ENCODE measurements at regions of chr3 and their contacts with region 1.

Region 1: GRCh38 chr3:170414202-170414663 is 4.4 kb upstream of the CLDN11 start:
- DNase-seq: peak in 1 of 2 experiments; percentile 52
- H3K4me3 ChIP-seq: no peak overlapping the region
- H3K4me3 Mint-ChIP-seq: no peak overlapping the region
- H3K27ac Mint-ChIP-seq: no peak overlapping the region
- H3K4me1 ChIP-seq: no peaks in the 10 kb centered on the region
- H3K4me1 Mint-ChIP-seq: no peaks in the 10 kb centered on the region
- H3K27me3 ChIP-seq: 0 out of 2 replicates have a peak, but pooled peaks cover 2% of the 10 kb centered on the region
- H3K27me3 Mint-ChIP-seq: peaks cover 3% of the 10 kb centered on the region
- CTCF ChIP-seq: peak; percentile 79 to 94

Region 2: GRCh38 chr3:170307671-170308403 is 106.4 kb before region 1 on chr3:
- CTCF ChIA-PET with region 1: interaction called, 6 read pairs
- POLR2A ChIA-PET with region 1: no interaction called
- intact Hi-C with region 1: loop called (anchors 1 kb)
- DNase-seq: peak; percentile 63 to 66
- H3K4me3 ChIP-seq: no peak overlapping the region
- H3K4me3 Mint-ChIP-seq: peak overlapping the region; percentile 29
- H3K27ac Mint-ChIP-seq: peak overlapping the region; percentile 91
- H3K4me1 ChIP-seq: peaks cover 29% of the 10 kb centered on the region
- H3K4me1 Mint-ChIP-seq: peaks cover 11% of the 10 kb centered on the region
- H3K27me3 ChIP-seq: no peaks in the 10 kb centered on the region
- H3K27me3 Mint-ChIP-seq: no peaks in the 10 kb centered on the region
- CTCF ChIP-seq: no peak

Region 3: DNA sequence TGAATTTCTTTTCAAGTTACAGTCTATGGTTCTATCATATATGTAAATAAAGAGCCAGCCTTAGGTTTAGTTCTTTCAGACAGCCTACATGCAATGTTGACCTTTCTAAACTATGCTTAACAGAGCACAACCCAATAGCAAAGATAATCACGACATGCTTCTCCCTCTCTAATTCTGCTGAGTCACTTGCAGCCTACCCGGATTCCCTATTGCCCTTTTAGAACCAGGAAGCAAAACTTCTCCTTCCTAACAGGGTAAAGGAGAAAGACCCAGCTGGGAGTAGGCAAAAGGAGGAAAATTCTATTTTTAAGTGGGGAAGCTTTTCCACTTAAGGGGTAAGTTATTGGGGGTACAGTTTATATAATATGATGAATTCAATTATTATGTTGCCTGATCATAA is 92.3 kb after region 1 on chr3:
- CTCF ChIA-PET with region 1: no interaction called
- POLR2A ChIA-PET with region 1: no interaction called
- intact Hi-C with region 1: no loop called
- DNase-seq: peak in 1 of 2 experiments; percentile 12
- H3K4me3 ChIP-seq: no peak overlapping the region
- H3K4me3 Mint-ChIP-seq: no peak overlapping the region
- H3K27ac Mint-ChIP-seq: peak overlapping the region; percentile 53
- H3K4me1 ChIP-seq: peaks cover 10% of the 10 kb centered on the region
- H3K4me1 Mint-ChIP-seq: no peaks in the 10 kb centered on the region
- H3K27me3 ChIP-seq: no peaks in the 10 kb centered on the region
- H3K27me3 Mint-ChIP-seq: no peaks in the 10 kb centered on the region
- CTCF ChIP-seq: no peak

Region 4: DNA sequence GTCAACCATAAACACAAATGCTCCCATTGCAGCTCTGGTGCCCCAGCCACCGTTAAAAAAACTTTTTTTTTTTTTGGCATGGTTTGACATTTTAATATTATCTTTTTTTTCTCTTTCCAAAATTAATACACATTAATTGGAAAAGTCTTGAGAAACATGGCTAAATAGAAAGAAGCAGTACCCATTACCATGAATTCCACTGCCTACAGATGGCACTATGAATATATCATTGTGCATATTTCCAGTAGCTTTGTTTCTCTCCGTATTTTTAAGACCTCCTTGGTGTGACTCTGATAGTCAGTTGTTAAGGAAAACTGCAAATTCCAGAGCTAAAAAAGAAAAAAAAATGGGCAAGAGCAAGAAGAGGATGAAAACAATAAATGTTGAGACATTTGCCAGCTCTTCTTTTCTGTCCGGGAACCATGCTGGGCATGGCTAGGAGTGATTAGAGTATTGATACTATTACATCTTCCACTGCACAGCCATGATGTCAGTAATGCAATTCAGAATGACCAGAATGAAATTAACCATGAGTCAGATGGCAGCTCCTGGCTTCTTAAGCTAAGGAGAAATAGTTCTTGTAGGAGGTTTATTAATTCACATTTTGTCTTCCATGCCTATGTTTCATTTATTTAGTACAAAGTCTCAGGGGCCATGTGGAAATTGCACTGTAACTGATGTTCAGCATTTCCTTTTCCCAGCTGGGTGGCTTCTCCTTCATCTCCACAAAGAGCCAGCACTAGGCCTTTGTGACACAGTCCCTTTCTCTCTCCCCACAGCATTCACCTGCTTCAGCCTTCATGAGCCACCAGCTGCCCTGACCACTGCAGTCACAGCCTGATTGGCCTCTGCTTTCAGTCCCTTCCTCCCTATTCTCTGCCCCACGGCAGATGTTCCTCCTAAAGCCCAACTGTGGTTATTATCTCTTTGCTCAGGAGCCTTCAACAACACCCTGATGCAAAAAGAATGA is 139.8 kb after region 1 on chr3:
- CTCF ChIA-PET with region 1: no interaction called
- POLR2A ChIA-PET with region 1: no interaction called
- intact Hi-C with region 1: loop called (anchors 5 kb)
- DNase-seq: no peak
- H3K4me3 ChIP-seq: no peak overlapping the region
- H3K4me3 Mint-ChIP-seq: no peak overlapping the region
- H3K27ac Mint-ChIP-seq: no peak overlapping the region
- H3K4me1 ChIP-seq: no peaks in the 10 kb centered on the region
- H3K4me1 Mint-ChIP-seq: no peaks in the 10 kb centered on the region
- H3K27me3 ChIP-seq: no peaks in the 10 kb centered on the region
- H3K27me3 Mint-ChIP-seq: peaks cover 9% of the 10 kb centered on the region
- CTCF ChIP-seq: no peak

Region 5: DNA sequence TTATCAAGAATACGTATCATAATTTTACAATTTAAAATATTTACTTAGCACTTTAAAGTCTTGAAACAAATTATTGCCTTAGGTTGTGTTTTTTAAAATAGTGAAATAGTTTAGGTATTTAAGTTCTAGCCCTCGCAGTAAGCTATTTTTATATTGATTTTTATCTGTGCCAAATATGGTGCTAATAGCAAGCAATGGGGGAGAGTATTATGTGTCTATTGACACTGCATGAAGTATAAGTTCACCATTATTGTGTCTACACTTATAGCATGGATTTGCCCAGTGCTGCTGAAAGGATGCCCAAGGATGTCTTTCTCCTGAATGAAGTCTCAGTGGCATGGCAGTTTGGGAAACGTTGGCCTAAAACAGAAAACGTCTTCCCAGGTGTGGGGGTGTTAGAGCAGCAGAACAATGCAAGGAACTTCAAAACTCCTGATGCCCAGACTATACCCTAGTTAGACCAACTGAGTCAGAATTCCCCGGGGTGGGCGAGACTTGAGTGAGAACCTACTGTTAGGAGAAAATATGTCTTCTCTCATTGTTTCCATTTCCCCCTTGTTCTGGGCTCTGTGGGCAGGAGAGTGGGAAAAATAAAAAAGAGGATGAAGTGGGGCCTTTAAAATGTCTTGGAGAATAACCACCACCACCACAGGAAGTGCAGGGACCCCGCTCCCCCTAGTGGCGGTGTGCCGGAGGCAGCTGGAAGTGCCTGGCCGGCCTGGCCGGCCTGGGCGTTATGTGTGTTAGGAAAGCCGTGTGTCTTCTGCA is 275.8 kb after region 1 on chr3:
- CTCF ChIA-PET with region 1: interaction called, 7 read pairs
- POLR2A ChIA-PET with region 1: no interaction called
- intact Hi-C with region 1: loop called (anchors 1 kb)
- DNase-seq: peak; percentile 63 to 77
- H3K4me3 ChIP-seq: no peak overlapping the region
- H3K4me3 Mint-ChIP-seq: no peak overlapping the region
- H3K27ac Mint-ChIP-seq: peak overlapping the region; percentile 80
- H3K4me1 ChIP-seq: peaks cover 25% of the 10 kb centered on the region
- H3K4me1 Mint-ChIP-seq: peaks cover 7% of the 10 kb centered on the region
- H3K27me3 ChIP-seq: no peaks in the 10 kb centered on the region
- H3K27me3 Mint-ChIP-seq: no peaks in the 10 kb centered on the region
- CTCF ChIP-seq: peak; percentile 82 to 89

Region 6: DNA sequence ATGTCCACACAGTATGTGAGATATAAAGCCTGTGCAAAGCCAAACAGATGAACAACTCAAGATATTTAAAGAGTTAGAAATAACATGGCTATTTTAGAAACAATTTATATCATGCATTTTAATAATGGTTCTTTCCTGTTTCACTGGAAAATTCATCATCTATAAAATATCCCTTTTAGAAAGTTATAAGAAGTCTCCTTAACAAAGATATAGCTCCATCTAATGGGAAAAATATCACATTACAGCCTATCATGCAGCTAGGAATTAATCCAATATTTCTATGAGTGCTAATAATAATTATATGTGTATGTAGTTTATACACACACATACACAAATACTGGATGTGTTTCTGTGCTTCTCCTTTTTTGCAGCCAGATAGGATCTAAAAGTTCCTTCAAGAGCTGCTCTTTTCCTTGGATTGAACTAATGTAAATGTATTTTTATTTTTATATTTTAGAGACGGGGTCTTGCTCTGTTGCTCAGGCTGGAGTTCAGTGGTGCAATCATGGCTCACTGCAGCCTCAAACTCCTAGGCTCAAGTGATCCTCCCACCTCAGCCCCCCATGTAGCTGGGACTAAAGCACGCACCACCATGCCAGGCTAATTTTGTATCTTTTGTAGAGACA is 434.2 kb after region 1 on chr3:
- CTCF ChIA-PET with region 1: interaction called, 8 read pairs
- POLR2A ChIA-PET with region 1: no interaction called
- intact Hi-C with region 1: loop called (anchors 1 kb)
- DNase-seq: no peak
- H3K4me3 ChIP-seq: no peak overlapping the region
- H3K4me3 Mint-ChIP-seq: no peak overlapping the region
- H3K27ac Mint-ChIP-seq: no peak overlapping the region
- H3K4me1 ChIP-seq: no peaks in the 10 kb centered on the region
- H3K4me1 Mint-ChIP-seq: no peaks in the 10 kb centered on the region
- H3K27me3 ChIP-seq: no peaks in the 10 kb centered on the region
- H3K27me3 Mint-ChIP-seq: peaks cover 4% of the 10 kb centered on the region
- CTCF ChIP-seq: peak; percentile 10 to 28

Measured in Caco-2 (cell line).